ENCODE measurements at regions of chr18 and their contacts with region 1.

Region 1: GRCh38 chr18:49412679-49413078 is 47.8 kb downstream of the DYM start:
- DNase-seq: no peak
- ATAC-seq: no peak
- H3K4me3 ChIP-seq: no peak overlapping the region
- H3K27ac ChIP-seq: peak overlapping the region in 3 of 12 donors; percentile 5 to 40 (median 22)
- H3K4me1 ChIP-seq: peaks cover 0 to 16% (median 1%) of the 10 kb centered on the region in 12 donors
- H3K27me3 ChIP-seq: no peaks in the 10 kb centered on the region
- CTCF ChIP-seq: no peak
- POLR2A ChIP-seq: no peak

Region 2: GRCh38 chr18:49189772-49190171 is 222.9 kb before region 1 on chr18:
- intact Hi-C with region 1: loop called in 1 of 10 experiments (anchors 10 kb)
- DNase-seq: no peak
- ATAC-seq: no peak
- H3K4me3 ChIP-seq: no peak overlapping the region
- H3K27ac ChIP-seq: no peak overlapping the region
- H3K4me1 ChIP-seq: peaks cover 0 to 29% (median 8%) of the 10 kb centered on the region in 12 donors
- H3K27me3 ChIP-seq: no peaks in the 10 kb centered on the region
- CTCF ChIP-seq: no peak
- POLR2A ChIP-seq: no peak

Region 3: DNA sequence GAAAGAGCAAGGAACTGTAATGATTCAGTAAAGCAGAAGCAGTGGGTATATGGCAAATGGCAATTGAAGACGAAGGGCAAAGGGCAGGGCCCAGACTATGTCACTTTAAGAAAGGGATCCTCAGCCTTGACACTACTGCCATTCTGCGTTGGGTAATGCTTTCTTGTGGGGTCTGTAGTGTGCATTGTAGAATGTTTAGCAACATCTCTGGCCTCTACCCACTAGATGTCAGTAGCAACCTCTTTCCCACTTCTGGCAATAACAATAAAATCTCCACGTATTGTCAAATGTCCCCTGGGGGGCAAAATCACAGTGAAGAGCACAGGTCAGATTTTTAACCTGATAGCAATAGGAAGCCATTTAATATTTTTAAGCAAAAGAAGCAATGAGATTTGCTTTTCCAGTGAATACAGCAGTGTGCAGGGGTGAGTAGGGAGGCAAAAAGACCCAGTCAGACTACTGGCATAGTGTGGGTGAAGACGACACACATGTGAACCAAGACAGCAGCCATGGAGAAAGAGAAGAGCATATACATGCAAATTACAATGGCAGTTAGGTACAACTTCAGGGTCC is 161.8 kb before region 1 on chr18:
- intact Hi-C with region 1: loop called in 7 of 10 experiments (anchors 2 to 10 kb)
- DNase-seq: no peak
- ATAC-seq: peak in 3 of 4 donors; percentile 38 to 44 (median 42)
- H3K4me3 ChIP-seq: no peak overlapping the region
- H3K27ac ChIP-seq: no peak overlapping the region
- H3K4me1 ChIP-seq: peaks cover 0 to 26% (median 0%) of the 10 kb centered on the region in 12 donors
- H3K27me3 ChIP-seq: no peaks in the 10 kb centered on the region
- CTCF ChIP-seq: peak in 11 of 12 donors; percentile 14 to 58 (median 41)
- POLR2A ChIP-seq: no peak

Region 4: DNA sequence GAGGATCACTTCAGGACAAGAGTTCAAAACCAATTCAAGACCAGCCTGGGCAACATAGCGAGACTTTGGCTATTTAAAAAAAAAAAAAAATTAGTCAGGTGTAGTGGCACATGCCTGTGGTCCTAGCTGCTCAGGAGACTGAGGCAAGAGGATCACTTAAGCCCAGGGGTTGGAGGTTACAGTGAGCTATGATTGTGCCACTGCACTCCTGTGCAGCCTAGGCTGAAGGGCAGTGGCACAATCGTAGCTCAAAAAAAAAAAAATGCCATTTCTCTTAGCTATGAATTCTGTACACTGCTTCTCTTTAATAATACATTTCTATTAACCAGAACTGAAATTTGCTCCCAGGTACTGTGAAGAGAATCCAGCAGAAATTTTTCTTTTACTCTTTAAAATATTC is 155.1 kb before region 1 on chr18:
- intact Hi-C with region 1: loop called in 7 of 10 experiments (anchors 2 to 10 kb)
- DNase-seq: no peak
- ATAC-seq: no peak
- H3K4me3 ChIP-seq: no peak overlapping the region
- H3K27ac ChIP-seq: no peak overlapping the region
- H3K4me1 ChIP-seq: no peaks in the 10 kb centered on the region
- H3K27me3 ChIP-seq: no peaks in the 10 kb centered on the region
- CTCF ChIP-seq: no peak
- POLR2A ChIP-seq: no peak

Region 5: DNA sequence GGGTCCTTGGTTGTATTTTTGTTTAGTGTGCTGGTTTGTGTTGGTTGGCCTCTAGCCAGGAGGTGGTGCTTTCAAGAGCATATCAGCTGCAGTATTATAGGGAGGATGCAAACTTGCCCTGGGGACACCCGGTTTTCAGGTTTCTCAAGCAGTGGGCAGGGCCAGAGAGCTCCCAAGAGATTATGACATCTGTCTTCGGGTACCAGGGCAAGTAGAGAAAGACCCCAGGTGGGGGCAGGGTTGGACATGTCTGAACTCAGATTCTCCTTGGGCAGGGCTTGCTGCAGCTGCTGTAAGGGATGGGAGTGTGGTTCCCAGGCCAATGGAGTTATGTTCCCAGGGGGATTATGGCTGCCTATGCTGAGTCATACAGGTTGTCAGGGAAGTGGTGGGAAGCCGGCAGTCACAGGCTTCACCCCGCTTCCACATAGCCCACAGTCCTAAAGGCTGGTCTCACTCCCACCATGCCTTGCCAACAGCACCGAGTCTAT is 366.3 kb after region 1 on chr18:
- intact Hi-C with region 1: no loop called
- DNase-seq: no peak
- ATAC-seq: no peak
- H3K4me3 ChIP-seq: no peak overlapping the region
- H3K27ac ChIP-seq: no peak overlapping the region
- H3K4me1 ChIP-seq: peaks cover 0 to 6% (median 0%) of the 10 kb centered on the region in 12 donors
- H3K27me3 ChIP-seq: no peaks in the 10 kb centered on the region
- CTCF ChIP-seq: no peak
- POLR2A ChIP-seq: no peak

Region 6: GRCh38 chr18:49878567-49879270 is 466.0 kb after region 1 on chr18:
- intact Hi-C with region 1: no loop called
- DNase-seq: no peak
- ATAC-seq: no peak
- H3K4me3 ChIP-seq: no peak overlapping the region
- H3K27ac ChIP-seq: no peak overlapping the region
- H3K4me1 ChIP-seq: no peaks in the 10 kb centered on the region
- H3K27me3 ChIP-seq: peaks cover 0 to 8% (median 0%) of the 10 kb centered on the region in 9 donors
- CTCF ChIP-seq: no peak
- POLR2A ChIP-seq: no peak